H1 (cell line): ENCODE measurements at regions of chr10 and their contacts with region 1.

Region 1: DNA sequence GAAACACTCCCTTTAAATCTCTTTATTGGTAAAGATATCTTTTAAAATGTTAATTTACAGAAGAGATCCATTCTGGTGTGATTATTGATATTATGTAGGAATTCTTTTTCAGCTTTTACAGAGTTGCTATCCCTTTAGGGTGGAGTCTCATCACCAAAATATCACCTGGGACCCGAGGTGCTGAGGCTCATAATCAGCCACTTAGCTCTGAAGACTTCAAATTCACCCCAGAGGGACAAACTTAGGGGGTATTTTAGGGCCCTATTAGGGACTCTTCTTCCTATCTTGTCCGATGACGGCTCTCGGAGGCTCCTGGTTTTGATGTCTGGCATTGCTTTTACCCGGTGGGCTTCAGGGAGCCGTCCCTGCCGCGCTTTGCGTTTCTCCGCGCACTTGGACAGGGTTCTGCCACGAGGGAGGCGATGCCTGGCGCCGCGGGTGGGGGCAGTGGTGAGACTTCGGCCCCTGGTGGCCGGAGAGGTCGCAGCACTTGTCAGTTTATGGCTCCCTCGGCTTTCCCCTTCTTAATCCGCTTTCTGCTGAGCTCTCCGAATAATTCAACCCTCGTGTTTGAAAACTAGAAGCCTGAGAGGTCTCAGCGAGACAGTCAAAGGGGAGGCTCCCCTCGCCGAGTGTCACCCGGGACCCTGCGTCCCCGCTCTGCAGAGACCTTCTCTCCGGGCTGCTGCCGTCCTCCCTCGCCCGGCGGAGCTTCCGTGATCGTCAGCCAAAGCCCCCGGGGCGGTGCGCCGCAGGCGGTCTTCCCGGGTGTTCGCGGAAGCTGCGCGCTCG is 27.8 kb downstream of the RBM20 start:
- DNase-seq: peak in 1 of 2 experiments; percentile 83
- H3K4me3 ChIP-seq: peak overlapping the region; percentile 27 to 70 (median 52)
- H3K27ac ChIP-seq: no peak overlapping the region
- H3K4me1 ChIP-seq: peaks cover 7 to 20% (median 13%) of the 10 kb centered on the region in 4 experiments; a peak in 6 of 7 replicates
- H3K27me3 ChIP-seq: peaks cover 5 to 58% (median 40%) of the 10 kb centered on the region in 4 experiments
- CTCF ChIP-seq: peak; percentile 77 to 95 (median 80)
- EP300 ChIP-seq: no peak
- POLR2A ChIP-seq: no peak
- RAD21 ChIP-seq: peak; percentile 72 to 82

Region 2: GRCh38 chr10:110641256-110641655 is 30.7 kb before region 1 on chr10:
- CTCF ChIA-PET with region 1: interaction called, 51 read pairs
- POLR2A ChIA-PET with region 1: interaction called, 5 read pairs
- DNase-seq: no peak
- H3K4me3 ChIP-seq: peak overlapping the region in 1 of 4 experiments; percentile 30; a peak in 2 of 8 replicates
- H3K27ac ChIP-seq: no peak overlapping the region
- H3K4me1 ChIP-seq: peaks cover 12 to 30% (median 15%) of the 10 kb centered on the region in 4 experiments
- H3K27me3 ChIP-seq: peaks cover 30 to 44% (median 38%) of the 10 kb centered on the region in 4 experiments
- CTCF ChIP-seq: no peak
- EP300 ChIP-seq: no peak
- POLR2A ChIP-seq: no peak
- RAD21 ChIP-seq: no peak

Region 3: GRCh38 chr10:110655320-110655719 is 16.7 kb before region 1 on chr10:
- CTCF ChIA-PET with region 1: interaction called, 64 read pairs
- POLR2A ChIA-PET with region 1: interaction called, 5 read pairs
- DNase-seq: no peak
- H3K4me3 ChIP-seq: no peak overlapping the region
- H3K27ac ChIP-seq: no peak overlapping the region
- H3K4me1 ChIP-seq: peaks cover 0 to 2% (median 0%) of the 10 kb centered on the region in 4 experiments; a peak in 1 of 7 replicates
- H3K27me3 ChIP-seq: no peaks in the 10 kb centered on the region; a peak in 1 of 7 replicates
- CTCF ChIP-seq: no peak
- EP300 ChIP-seq: no peak
- POLR2A ChIP-seq: no peak
- RAD21 ChIP-seq: no peak

Region 4: DNA sequence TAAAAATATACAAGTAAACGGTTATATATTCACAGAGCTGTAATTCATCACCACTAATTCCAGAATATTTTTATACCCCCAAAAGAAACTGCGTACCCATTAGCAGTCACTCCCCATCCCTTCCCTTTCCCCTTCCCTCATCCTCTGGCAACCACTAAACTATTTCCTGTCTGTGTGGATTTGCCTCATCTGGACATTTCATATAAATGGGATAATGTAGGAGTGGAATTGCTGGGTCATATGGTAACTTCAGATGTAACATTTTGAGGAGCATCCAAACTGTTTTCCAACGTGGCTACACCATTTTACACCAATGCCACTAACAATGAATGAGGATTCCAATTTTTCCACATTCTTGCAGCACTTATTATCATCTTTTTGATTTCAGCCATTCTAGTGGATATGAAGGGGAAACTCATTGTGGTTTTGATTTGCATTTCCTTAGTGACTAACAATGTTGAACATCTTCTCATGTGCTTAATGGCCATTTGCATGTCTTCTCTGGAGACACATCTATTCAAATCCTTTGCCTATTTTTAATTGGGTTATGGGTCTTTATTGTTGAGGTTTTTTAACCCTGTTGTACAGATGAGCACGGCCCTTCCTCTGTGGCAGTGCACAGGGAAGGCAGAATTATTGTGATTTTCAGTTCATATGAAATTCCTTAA is 51.4 kb after region 1 on chr10:
- CTCF ChIA-PET with region 1: no interaction called
- POLR2A ChIA-PET with region 1: no interaction called
- DNase-seq: no peak
- H3K4me3 ChIP-seq: no peak overlapping the region
- H3K27ac ChIP-seq: no peak overlapping the region
- H3K4me1 ChIP-seq: no peaks in the 10 kb centered on the region
- H3K27me3 ChIP-seq: no peaks in the 10 kb centered on the region
- CTCF ChIP-seq: no peak
- EP300 ChIP-seq: no peak
- POLR2A ChIP-seq: no peak
- RAD21 ChIP-seq: no peak